Activated T-helper 2 cell treated with anti-CD3 and anti-CD28 coated beads, Interferon-gamma antibody, Interleukin-2, Interleukin-4, amounts not matched to agents 10 μg/mL and 5 μg/mL and 100 μg/mL, durations not matched to agents 14 hours and 24 hours and 36 hours (primary cell): ENCODE measurements at regions of chr19 and their contacts with region 1.

Region 1: DNA sequence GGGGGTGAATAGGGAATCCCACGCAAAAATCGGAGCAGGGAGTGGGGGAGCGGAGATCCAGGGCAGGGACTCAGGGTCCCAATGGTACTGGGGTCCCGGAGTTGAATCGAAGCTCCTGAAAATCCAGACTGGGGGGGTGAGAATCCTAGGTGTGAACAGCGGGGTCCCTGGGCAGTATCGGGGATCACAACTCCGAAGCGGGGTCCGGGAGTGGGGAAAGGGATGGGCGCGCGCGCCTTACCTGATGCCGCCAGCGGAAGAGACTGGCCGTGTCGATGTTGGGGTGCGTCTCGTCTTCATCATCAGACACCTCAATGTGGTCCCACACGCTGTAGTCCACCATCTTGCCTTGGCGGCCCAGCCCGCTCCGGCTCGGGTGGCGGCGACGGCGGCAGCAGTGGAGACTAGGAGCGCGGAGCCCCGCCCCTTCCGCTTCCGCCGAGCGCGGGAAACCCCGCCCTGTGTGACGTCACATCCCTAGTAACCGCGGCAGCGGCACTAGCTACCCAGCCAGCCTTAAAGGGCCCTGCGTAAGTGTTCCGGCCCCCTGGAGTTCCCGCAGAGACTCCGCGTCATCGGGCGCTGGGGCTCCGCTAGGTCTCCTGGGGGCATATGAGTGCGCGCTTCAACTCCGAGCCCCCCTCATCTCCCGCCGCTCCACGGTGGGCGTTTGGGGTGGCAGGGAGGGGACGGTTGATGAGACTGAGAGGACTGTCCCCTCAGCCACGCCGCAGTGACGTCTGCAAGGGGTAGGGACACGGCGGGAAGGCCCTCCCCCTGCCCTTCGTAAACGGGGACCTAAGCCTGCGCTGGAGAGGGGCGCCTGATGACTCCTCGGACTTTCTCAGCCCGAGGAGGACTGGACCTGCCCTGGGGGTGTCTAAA is at the start of gene CDC37:
- DNase-seq: peak; percentile 98
- H3K4me3 Mint-ChIP-seq: peak within 1 kb of the TSS; percentile 96
- H3K27ac Mint-ChIP-seq: peak within 1 kb of the TSS; percentile 87
- H3K4me1 Mint-ChIP-seq: peaks cover 41% of the 10 kb centered on the region
- H3K27me3 Mint-ChIP-seq: no peaks in the 10 kb centered on the region
- total RNA-seq, gene CDC37: 285 and 300 TPM in 2 replicates

Region 2: GRCh38 chr19:10346509-10346908 is 56.9 kb before region 1 on chr19:
- intact Hi-C with region 1: no loop called
- DNase-seq: no peak
- H3K4me3 Mint-ChIP-seq: no peak overlapping the region
- H3K27ac Mint-ChIP-seq: no peak overlapping the region
- H3K4me1 Mint-ChIP-seq: no peaks in the 10 kb centered on the region
- H3K27me3 Mint-ChIP-seq: no peaks in the 10 kb centered on the region

Region 3: GRCh38 chr19:10416380-10417257 is 13.2 kb after region 1 on chr19:
- intact Hi-C with region 1: loop called (anchors 1 kb)
- DNase-seq: peak; percentile 94
- H3K4me3 Mint-ChIP-seq: peak overlapping the region; percentile 80
- H3K27ac Mint-ChIP-seq: peak overlapping the region; percentile 84
- H3K4me1 Mint-ChIP-seq: peaks cover 45% of the 10 kb centered on the region
- H3K27me3 Mint-ChIP-seq: no peaks in the 10 kb centered on the region

Region 4: DNA sequence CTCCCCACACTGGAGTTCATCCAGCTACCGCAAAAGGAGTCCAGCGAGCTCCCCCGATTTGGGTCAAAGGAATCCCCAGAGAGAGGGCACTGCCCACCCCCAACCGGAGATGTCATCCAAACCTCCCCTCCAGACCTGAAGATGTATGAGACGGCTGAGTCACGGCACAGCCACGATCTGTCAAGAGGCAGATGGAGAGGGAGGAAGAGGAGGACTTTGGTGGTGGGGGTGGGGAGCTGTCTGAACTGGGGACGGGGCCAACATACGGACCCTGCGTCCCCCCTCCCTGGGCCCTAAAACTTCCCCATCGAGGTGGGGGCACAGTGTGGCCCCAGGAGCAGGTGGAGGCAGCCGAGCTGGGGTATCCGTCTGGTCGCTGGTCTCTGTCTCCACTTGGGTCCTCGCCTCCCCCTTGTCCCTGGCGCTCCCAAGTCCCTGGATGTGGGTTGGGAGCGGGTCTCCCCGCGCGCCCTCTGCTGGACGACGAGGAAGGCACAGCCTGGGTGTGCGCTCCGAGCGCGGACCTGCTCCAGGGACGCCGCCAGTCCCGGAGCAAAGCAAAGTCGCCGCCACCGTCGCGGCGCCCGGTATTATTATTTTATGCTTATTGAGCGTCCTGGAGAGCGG is 20.7 kb after region 1 on chr19:
- intact Hi-C with region 1: loop called (anchors 1 kb)
- DNase-seq: peak; percentile 66
- H3K4me3 Mint-ChIP-seq: peak overlapping the region; percentile 96
- H3K27ac Mint-ChIP-seq: peak overlapping the region; percentile 73
- H3K4me1 Mint-ChIP-seq: peaks cover 59% of the 10 kb centered on the region
- H3K27me3 Mint-ChIP-seq: peaks cover 1% of the 10 kb centered on the region

Region 5: GRCh38 chr19:10431943-10432735 is 28.8 kb after region 1 on chr19:
- intact Hi-C with region 1: loop called (anchors 1 kb)
- DNase-seq: no peak
- H3K4me3 Mint-ChIP-seq: peak overlapping the region; percentile 88
- H3K27ac Mint-ChIP-seq: peak overlapping the region; percentile 94
- H3K4me1 Mint-ChIP-seq: peaks cover 62% of the 10 kb centered on the region
- H3K27me3 Mint-ChIP-seq: peaks cover 1% of the 10 kb centered on the region

Region 6: DNA sequence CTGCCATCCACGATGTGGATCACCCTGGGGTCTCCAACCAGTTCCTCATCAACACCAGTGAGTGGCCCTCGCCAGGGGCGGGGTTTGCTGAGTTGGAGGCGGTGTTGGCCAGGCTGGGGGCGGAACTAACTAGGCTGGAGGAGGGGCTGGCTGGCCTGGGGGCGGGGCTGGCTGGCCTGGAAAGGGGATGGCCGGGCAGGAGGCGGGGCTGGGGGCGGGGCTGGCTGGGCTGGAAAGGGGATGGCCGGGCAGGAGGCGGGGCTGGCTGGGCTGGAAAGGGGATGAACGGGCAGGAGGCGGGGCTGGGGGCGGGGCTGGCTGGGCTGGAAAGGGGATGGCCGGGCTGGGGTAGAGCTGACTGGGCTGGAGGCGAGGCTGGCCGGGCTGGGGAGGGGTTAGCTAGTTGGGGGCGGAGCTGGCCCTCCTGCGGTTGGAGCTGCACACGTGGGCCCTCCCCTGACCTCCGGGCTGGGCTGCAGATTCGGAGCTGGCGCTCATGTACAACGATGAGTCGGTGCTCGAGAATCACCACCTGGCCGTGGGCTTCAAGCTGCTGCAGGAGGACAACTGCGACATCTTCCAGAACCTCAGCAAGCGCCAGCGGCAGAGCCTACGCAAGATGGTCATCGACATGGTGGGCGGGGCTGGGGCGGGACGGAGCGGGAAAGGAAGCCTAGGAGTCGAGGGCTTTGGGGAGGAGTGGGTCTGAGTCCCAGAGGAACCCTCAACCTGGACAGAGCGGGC is 57.8 kb after region 1 on chr19:
- intact Hi-C with region 1: loop called (anchors 2 kb)
- DNase-seq: peak; percentile 86
- H3K4me3 Mint-ChIP-seq: no peak overlapping the region
- H3K27ac Mint-ChIP-seq: no peak overlapping the region
- H3K4me1 Mint-ChIP-seq: peaks cover 5% of the 10 kb centered on the region
- H3K27me3 Mint-ChIP-seq: no peaks in the 10 kb centered on the region

Region 7: DNA sequence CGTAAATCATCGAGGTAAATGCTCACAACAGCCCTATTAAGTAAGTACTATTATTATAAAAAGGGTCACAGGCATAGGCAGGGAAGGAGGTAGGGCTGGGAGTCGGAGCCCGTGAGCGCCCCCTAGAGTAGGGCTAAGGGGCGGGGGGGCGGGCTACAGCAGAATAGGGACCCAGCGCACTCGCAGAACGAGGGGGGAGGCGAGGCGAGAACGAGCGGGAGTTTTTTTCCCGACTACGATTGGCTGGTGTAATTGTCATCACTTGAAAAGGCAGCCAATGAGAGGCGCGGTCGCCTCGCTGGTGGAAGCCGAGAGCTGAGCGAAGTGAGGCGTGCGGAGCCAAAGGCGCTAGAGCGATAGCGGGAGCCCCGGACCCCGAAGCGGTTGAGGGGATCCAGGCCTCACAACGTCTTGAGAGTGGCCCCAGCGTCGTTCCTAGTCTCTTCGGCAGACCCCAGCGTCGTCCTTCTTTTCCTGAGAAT is 75.6 kb after region 1 on chr19:
- intact Hi-C with region 1: loop called (anchors 1 kb)
- DNase-seq: peak; percentile 86
- H3K4me3 Mint-ChIP-seq: peak overlapping the region; percentile 60
- H3K27ac Mint-ChIP-seq: peak overlapping the region; percentile 38
- H3K4me1 Mint-ChIP-seq: peaks cover 12% of the 10 kb centered on the region
- H3K27me3 Mint-ChIP-seq: no peaks in the 10 kb centered on the region